Psoas muscle (tissue), 8 donors: ENCODE measurements at regions of chr6 and their contacts with region 1.

Region 1: DNA sequence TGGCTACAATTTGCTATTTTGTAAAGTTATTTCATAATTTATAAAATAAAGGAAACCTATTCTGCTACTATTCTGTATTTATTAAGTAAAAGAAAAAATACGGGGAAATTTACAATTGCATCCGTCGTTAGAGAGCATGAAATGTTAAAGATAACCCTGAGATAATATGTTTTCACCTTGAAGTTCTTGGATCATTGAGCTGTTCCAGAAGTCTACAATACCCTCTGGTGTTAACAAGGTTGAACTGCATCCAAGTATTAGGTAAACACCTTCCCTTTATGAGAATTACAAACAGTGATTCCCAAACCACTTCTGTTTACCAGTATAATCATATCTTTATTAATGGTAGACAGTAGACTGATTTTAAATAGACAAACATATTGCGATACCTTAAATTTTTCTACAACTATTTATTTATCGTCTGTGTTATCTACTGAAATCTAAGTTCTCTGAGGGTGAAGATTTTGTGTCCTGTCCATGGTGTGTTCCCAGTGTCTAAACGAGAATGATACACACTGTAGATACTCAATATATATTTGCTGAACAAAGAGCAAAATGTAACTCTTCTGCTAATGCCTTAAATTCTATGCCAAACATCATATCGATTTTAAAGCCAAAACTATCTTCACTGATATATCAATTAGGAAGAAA is 28.2 kb downstream of the TBC1D32 start:
- DNase-seq: no peak
- ATAC-seq: no peak
- H3K4me3 ChIP-seq: no peak overlapping the region
- H3K27ac ChIP-seq: no peak overlapping the region
- H3K4me1 ChIP-seq: no peaks in the 10 kb centered on the region
- H3K27me3 ChIP-seq: no peaks in the 10 kb centered on the region
- CTCF ChIP-seq: peak; percentile 42

Region 2: DNA sequence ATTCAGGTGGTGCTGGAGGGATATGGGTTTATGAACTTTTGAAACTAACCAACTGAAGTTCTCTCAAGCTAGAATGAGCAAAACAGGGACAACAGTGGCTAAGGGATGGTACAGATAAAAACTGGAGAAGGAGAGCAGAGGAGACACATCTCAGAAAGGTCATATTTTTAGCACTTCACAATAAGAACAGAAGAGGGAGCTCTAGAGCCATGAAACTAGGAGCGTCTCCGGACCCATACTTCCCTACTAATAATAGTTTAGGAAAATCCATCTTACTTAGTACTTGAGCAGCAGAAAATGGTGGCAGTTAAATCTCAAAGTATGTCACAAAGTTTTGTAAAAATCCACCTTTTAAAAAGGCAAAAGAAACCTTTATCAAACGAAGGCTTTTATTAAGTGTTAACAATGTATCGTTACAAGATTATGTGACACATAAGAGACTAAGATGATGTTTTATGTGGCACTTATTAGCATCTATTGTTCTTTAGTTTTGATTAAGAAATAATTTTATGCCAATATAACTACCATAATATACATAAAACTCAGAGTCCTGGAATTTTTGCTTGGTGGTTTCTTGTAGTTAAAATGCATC is 250.4 kb before region 1 on chr6:
- intact Hi-C with region 1: loop called in 1 of 2 experiments (anchors 5 kb)
- DNase-seq: no peak
- ATAC-seq: peak in 1 of 4 donors; percentile 63
- H3K4me3 ChIP-seq: no peak overlapping the region
- H3K27ac ChIP-seq: no peak overlapping the region
- H3K4me1 ChIP-seq: no peaks in the 10 kb centered on the region
- H3K27me3 ChIP-seq: no peaks in the 10 kb centered on the region
- CTCF ChIP-seq: peak; percentile 67

Region 3: GRCh38 chr6:121426686-121427085 is 120.6 kb after region 1 on chr6:
- intact Hi-C with region 1: no loop called
- DNase-seq: no peak
- ATAC-seq: no peak
- H3K4me3 ChIP-seq: no peak overlapping the region
- H3K27ac ChIP-seq: no peak overlapping the region
- H3K4me1 ChIP-seq: no peaks in the 10 kb centered on the region
- H3K27me3 ChIP-seq: no peaks in the 10 kb centered on the region
- CTCF ChIP-seq: no peak